ENCODE measurements at regions of chr19 and their contacts with region 1.

Region 1: GRCh38 chr19:20167020-20167644 is at the start of gene ZNF486:
- DNase-seq: peak; percentile 83 to 97 (median 88)
- ATAC-seq: peak; percentile 97
- H3K4me3 ChIP-seq: peak within 1 kb of the TSS; percentile 67
- H3K4me3 Mint-ChIP-seq: peak within 1 kb of the TSS; percentile 98
- H3K27ac ChIP-seq: no peak within 1 kb of the TSS
- H3K27ac Mint-ChIP-seq: peak within 1 kb of the TSS; percentile 87
- H3K4me1 ChIP-seq: peaks cover 13% of the 10 kb centered on the region
- H3K4me1 Mint-ChIP-seq: peaks cover 63% of the 10 kb centered on the region
- H3K27me3 ChIP-seq: no peaks in the 10 kb centered on the region
- H3K27me3 Mint-ChIP-seq: no peaks in the 10 kb centered on the region
- CTCF ChIP-seq: no peak
- total RNA-seq, gene ZNF486: 3.0 to 3.8 TPM

Region 2: DNA sequence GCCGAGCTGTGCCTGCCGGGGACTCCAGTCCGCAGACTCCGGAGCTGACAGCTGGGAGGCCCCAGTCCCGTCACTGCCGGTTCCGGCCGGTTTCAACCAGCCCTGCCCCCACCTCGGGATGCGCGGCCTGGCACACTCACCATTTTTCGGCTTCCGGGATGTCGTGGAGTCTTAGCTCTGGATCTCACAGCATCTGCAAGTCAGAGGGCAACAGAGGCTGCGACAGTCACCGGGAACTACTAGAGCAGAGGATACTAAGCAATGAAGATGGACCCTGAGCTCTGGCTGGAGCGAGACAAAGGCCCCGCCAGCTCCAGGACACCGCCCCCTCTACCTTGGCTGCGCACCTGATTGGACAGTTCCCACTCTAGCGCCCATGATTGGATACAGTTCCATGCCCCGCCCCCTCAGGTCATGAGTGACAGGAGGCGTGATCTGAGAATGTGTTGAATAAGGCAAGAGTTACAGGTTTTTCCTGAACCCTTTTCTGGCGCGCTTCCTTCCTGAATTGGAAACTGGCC is 127.9 kb before region 1 on chr19 and contains the start of gene ZNF682:
- CTCF ChIA-PET with region 1: no interaction called
- POLR2A ChIA-PET with region 1: interaction called, 13 read pairs
- intact Hi-C with region 1: loop called in 1 of 2 experiments (anchors 5 kb)
- DNase-seq: peak; percentile 89 to 96 (median 92)
- ATAC-seq: peak; percentile 98
- H3K4me3 ChIP-seq: peak within 1 kb of the TSS; percentile 95
- H3K4me3 Mint-ChIP-seq: peak within 1 kb of the TSS; percentile 98
- H3K27ac ChIP-seq: peak within 1 kb of the TSS; percentile 72 to 77
- H3K27ac Mint-ChIP-seq: peak within 1 kb of the TSS; percentile 96
- H3K4me1 ChIP-seq: peaks cover 11% of the 10 kb centered on the region
- H3K4me1 Mint-ChIP-seq: peaks cover 19% of the 10 kb centered on the region
- H3K27me3 ChIP-seq: peaks cover 0 to 4% of the 10 kb centered on the region in 2 experiments
- H3K27me3 Mint-ChIP-seq: peaks cover 5% of the 10 kb centered on the region
- CTCF ChIP-seq: no peak
- total RNA-seq, gene ZNF682: 12.5 to 16.0 TPM

Region 3: GRCh38 chr19:20051841-20052768 is 115.0 kb before region 1 on chr19:
- CTCF ChIA-PET with region 1: no interaction called
- POLR2A ChIA-PET with region 1: interaction called, 16 read pairs
- intact Hi-C with region 1: loop called in 1 of 2 experiments (anchors 5 kb)
- DNase-seq: peak; percentile 29 to 77 (median 50)
- ATAC-seq: peak; percentile 93
- H3K4me3 ChIP-seq: peak overlapping the region; percentile 95
- H3K4me3 Mint-ChIP-seq: peak overlapping the region; percentile 99
- H3K27ac ChIP-seq: peak overlapping the region; percentile 67 to 73
- H3K27ac Mint-ChIP-seq: peak overlapping the region; percentile 90
- H3K4me1 ChIP-seq: peaks cover 15% of the 10 kb centered on the region
- H3K4me1 Mint-ChIP-seq: peaks cover 18% of the 10 kb centered on the region
- H3K27me3 ChIP-seq: no peaks in the 10 kb centered on the region
- H3K27me3 Mint-ChIP-seq: peaks cover 4% of the 10 kb centered on the region
- CTCF ChIP-seq: no peak

Region 4: DNA sequence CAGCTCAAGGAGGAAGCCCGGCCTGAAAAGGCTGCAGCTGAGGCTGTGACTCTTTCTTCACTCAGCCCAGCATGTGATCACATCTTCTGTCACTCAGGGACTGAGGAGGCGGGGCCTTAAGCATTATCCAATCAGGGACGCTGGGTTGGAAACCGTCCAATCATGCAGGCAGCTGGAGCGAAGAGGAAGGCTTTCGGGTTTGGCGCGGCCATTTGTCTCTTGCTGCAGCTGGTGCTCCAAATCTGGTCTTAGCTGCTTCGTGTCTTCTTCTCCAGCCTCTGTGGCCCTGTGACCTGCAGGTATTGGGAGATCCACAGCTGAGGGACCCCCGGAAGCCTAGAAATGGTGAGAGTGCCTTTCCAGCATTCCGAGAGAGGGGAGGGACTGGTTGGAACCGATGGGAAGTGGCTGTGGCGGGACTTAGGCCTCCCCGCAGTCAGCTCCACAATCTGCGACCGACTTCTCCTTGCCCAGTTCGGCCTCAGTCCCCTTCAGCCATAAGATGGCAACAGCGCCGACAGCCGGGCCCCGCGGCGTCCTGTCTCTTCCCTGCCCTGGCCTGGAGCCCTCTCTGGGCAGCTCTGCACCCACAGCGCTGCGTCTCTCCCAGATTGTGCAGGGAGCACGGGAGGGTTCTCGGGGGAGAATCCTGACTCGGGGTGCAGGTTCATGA is 89.2 kb before region 1 on chr19 and contains the start of gene ZNF90:
- CTCF ChIA-PET with region 1: no interaction called
- POLR2A ChIA-PET with region 1: interaction called, 19 read pairs
- intact Hi-C with region 1: no loop called
- DNase-seq: peak; percentile 69 to 94 (median 80)
- ATAC-seq: peak; percentile 100
- H3K4me3 ChIP-seq: peak within 1 kb of the TSS; percentile 60
- H3K4me3 Mint-ChIP-seq: peak within 1 kb of the TSS; percentile 92
- H3K27ac ChIP-seq: no peak within 1 kb of the TSS
- H3K27ac Mint-ChIP-seq: peak within 1 kb of the TSS; percentile 55
- H3K4me1 ChIP-seq: peaks cover 14% of the 10 kb centered on the region
- H3K4me1 Mint-ChIP-seq: peaks cover 20% of the 10 kb centered on the region
- H3K27me3 ChIP-seq: no peaks in the 10 kb centered on the region
- H3K27me3 Mint-ChIP-seq: no peaks in the 10 kb centered on the region
- CTCF ChIP-seq: no peak
- total RNA-seq, gene ZNF90: 2.9 to 3.7 TPM

Region 5: GRCh38 chr19:20124879-20125278 is 42.3 kb before region 1 on chr19:
- CTCF ChIA-PET with region 1: no interaction called
- POLR2A ChIA-PET with region 1: no interaction called
- intact Hi-C with region 1: no loop called
- DNase-seq: no peak
- ATAC-seq: no peak
- H3K4me3 ChIP-seq: no peak overlapping the region
- H3K4me3 Mint-ChIP-seq: no peak overlapping the region
- H3K27ac ChIP-seq: no peak overlapping the region
- H3K27ac Mint-ChIP-seq: no peak overlapping the region
- H3K4me1 ChIP-seq: no peaks in the 10 kb centered on the region
- H3K4me1 Mint-ChIP-seq: no peaks in the 10 kb centered on the region
- H3K27me3 ChIP-seq: no peaks in the 10 kb centered on the region
- H3K27me3 Mint-ChIP-seq: no peaks in the 10 kb centered on the region
- CTCF ChIP-seq: no peak

Region 6: DNA sequence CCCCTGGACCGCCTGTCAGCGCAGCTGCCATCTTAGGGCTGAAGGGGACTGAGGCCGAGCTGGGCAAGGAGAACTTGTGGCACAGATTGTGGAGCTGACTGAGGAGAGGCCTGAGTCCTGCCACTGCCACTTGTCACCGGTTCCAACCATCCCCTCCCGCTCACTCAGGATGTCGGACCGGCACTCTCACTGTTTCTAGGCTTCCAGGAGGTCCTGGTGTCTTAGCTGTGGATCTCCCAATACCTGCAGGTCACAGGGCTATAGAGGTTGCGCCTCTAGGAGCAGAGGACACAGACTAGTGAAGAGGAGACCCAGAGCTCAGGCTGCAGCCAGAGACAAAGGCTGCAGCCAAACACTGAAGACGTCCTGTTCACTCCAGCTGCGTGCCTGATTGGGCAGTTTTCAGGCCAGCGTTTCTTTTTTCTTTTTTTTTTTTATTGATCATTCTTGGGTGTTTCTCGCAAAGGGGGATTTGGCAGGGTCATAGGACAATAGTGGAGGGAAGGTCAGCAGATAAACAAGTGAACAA is 15.5 kb before region 1 on chr19:
- CTCF ChIA-PET with region 1: no interaction called
- POLR2A ChIA-PET with region 1: no interaction called
- intact Hi-C with region 1: no loop called
- DNase-seq: no peak
- ATAC-seq: no peak
- H3K4me3 ChIP-seq: no peak overlapping the region
- H3K4me3 Mint-ChIP-seq: no peak overlapping the region
- H3K27ac ChIP-seq: no peak overlapping the region
- H3K27ac Mint-ChIP-seq: no peak overlapping the region
- H3K4me1 ChIP-seq: no peaks in the 10 kb centered on the region
- H3K4me1 Mint-ChIP-seq: no peaks in the 10 kb centered on the region
- H3K27me3 ChIP-seq: no peaks in the 10 kb centered on the region
- H3K27me3 Mint-ChIP-seq: no peaks in the 10 kb centered on the region
- CTCF ChIP-seq: no peak

Region 7: GRCh38 chr19:20237761-20238623 is 70.9 kb after region 1 on chr19:
- CTCF ChIA-PET with region 1: interaction called, 4 read pairs
- POLR2A ChIA-PET with region 1: interaction called, 21 read pairs
- intact Hi-C with region 1: loop called in 1 of 2 experiments (anchors 5 kb)
- DNase-seq: peak; percentile 71 to 93 (median 82)
- ATAC-seq: peak; percentile 98
- H3K4me3 ChIP-seq: peak overlapping the region; percentile 88
- H3K4me3 Mint-ChIP-seq: peak overlapping the region; percentile 97
- H3K27ac ChIP-seq: no peak overlapping the region
- H3K27ac Mint-ChIP-seq: peak overlapping the region; percentile 70
- H3K4me1 ChIP-seq: peaks cover 11% of the 10 kb centered on the region
- H3K4me1 Mint-ChIP-seq: peaks cover 12% of the 10 kb centered on the region
- H3K27me3 ChIP-seq: no peaks in the 10 kb centered on the region
- H3K27me3 Mint-ChIP-seq: no peaks in the 10 kb centered on the region
- CTCF ChIP-seq: no peak

Region 8: DNA sequence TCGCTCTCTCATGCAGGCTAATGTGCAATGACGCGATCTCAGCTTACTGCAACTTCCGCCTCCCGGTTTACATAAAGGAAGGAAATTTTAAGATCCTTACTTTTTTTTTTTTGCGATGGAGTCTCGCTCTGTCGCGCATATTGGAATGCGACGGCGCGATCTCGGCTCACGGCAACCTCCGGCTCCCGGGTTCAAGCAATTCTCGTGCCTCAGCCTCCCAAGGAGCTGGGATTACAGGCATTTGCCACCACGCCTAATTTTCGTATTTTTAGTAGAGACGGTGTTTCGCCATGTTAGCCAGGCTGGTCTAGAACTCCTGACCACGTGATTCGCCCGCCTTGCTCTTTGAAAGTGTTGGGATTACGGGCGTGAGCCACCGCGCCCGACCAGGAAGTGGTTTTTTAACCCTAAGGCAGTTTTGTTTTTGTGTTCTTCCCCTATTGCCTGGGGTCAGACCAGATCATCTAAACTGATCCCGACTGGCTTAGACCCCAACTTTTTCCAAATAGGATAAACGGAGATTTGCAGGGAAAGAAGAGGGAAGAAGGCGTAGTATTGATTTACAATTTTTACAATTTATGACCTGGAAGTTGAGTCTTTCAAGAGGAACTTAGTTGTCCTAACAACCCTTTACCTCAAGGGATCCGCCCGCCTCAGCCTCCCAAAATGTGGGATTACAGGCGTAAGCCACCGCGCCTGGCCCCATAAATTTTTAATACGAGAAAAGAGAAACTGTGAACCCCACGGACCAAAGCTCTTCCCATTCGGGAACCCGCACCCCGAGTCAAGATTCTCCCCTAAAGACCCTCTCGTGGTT is 256.5 kb after region 1 on chr19:
- CTCF ChIA-PET with region 1: no interaction called
- POLR2A ChIA-PET with region 1: interaction called, 5 read pairs
- intact Hi-C with region 1: loop called in 1 of 2 experiments (anchors 10 kb)
- DNase-seq: peak in 9 of 14 experiments; percentile 6 to 64 (median 34)
- ATAC-seq: no peak
- H3K4me3 ChIP-seq: peak overlapping the region; percentile 83
- H3K4me3 Mint-ChIP-seq: peak overlapping the region; percentile 97
- H3K27ac ChIP-seq: peak overlapping the region; percentile 57 to 65
- H3K27ac Mint-ChIP-seq: peak overlapping the region; percentile 90
- H3K4me1 ChIP-seq: peaks cover 9% of the 10 kb centered on the region
- H3K4me1 Mint-ChIP-seq: peaks cover 15% of the 10 kb centered on the region
- H3K27me3 ChIP-seq: no peaks in the 10 kb centered on the region
- H3K27me3 Mint-ChIP-seq: no peaks in the 10 kb centered on the region
- CTCF ChIP-seq: no peak

Region 9: GRCh38 chr19:21835810-21836444 is 1668.8 kb after region 1 on chr19 and contains the start of gene ZNF43:
- CTCF ChIA-PET with region 1: no interaction called
- POLR2A ChIA-PET with region 1: no interaction called
- intact Hi-C with region 1: loop called in 1 of 2 experiments (anchors 10 kb)
- DNase-seq: peak; percentile 87 to 97 (median 91)
- ATAC-seq: peak; percentile 98
- H3K4me3 ChIP-seq: peak within 1 kb of the TSS; percentile 81
- H3K4me3 Mint-ChIP-seq: peak within 1 kb of the TSS; percentile 97
- H3K27ac ChIP-seq: peak within 1 kb of the TSS; percentile 82 to 83
- H3K27ac Mint-ChIP-seq: peak within 1 kb of the TSS; percentile 94
- H3K4me1 ChIP-seq: peaks cover 14% of the 10 kb centered on the region
- H3K4me1 Mint-ChIP-seq: peaks cover 33% of the 10 kb centered on the region
- H3K27me3 ChIP-seq: no peaks in the 10 kb centered on the region
- H3K27me3 Mint-ChIP-seq: no peaks in the 10 kb centered on the region
- CTCF ChIP-seq: no peak
- total RNA-seq, gene ZNF43: 26.1 to 30.2 TPM

Measured in CD4-positive, alpha-beta T cell (primary cell).